AG04450 (cell line): ENCODE measurements at regions of chr1 and their contacts with region 1.

Region 1: DNA sequence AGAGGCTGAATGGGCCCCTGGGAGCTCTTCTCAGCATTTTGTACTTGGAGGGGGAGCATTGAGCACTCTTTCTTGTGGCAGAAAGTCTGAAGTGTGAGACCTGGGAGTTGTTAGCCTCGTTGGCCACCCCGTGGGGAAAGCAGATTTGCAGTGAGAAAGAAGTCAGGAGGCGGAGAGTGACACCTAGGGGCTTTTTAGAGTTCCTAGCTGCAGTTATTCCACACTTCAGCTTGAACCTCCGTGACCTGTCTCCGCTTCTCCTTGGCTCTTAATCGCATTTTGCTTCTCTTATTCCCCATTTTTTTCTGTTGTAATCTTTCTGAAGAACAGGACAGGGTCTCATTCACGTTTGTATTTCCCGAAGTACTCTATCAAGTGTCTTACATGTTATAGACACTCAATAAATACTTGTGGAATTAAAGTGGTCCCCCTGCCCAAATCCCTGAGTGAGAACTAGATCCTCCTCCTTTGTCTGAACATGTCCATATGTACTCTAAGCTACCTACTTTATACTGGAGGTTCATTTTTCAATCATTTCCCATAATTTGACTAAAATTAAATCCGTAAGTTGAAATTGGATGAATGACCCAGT is 14.5 kb upstream of the C1orf141 start:
- DNase-seq: peak; percentile 66
- H3K4me3 ChIP-seq: no peak overlapping the region
- H3K27ac ChIP-seq: no peak overlapping the region
- H3K27me3 ChIP-seq: peaks cover 5% of the 10 kb centered on the region
- CTCF ChIP-seq: peak; percentile 91

Region 2: DNA sequence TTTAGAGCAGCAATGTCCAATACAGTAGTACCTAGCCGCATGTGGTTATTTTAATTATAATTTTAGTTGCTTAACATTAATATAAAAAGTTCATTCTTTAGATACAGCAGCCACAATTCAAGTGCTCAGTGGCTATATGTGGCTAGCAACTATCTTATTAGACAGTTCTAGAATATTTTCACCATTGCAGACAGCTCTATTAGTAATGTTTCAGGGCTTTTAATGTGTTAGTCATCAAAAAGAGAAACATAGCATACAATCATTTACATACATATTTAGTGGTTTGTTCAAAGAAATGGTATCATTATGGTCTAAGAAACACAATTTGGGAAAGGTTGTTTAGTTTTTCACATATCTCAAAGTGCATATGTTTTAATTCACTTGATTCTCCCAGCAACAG is 463.6 kb before region 1 on chr1:
- CTCF ChIA-PET with region 1: no interaction called
- POLR2A ChIA-PET with region 1: no interaction called
- DNase-seq: no peak
- H3K4me3 ChIP-seq: no peak overlapping the region
- H3K27ac ChIP-seq: no peak overlapping the region
- H3K27me3 ChIP-seq: no peaks in the 10 kb centered on the region
- CTCF ChIP-seq: no peak

Region 3: GRCh38 chr1:66764994-66765578 is 384.2 kb before region 1 on chr1:
- CTCF ChIA-PET with region 1: interaction called, 100 read pairs
- POLR2A ChIA-PET with region 1: no interaction called
- DNase-seq: peak; percentile 29
- H3K4me3 ChIP-seq: no peak overlapping the region
- H3K27ac ChIP-seq: no peak overlapping the region
- H3K27me3 ChIP-seq: no peaks in the 10 kb centered on the region
- CTCF ChIP-seq: peak; percentile 78

Region 4: DNA sequence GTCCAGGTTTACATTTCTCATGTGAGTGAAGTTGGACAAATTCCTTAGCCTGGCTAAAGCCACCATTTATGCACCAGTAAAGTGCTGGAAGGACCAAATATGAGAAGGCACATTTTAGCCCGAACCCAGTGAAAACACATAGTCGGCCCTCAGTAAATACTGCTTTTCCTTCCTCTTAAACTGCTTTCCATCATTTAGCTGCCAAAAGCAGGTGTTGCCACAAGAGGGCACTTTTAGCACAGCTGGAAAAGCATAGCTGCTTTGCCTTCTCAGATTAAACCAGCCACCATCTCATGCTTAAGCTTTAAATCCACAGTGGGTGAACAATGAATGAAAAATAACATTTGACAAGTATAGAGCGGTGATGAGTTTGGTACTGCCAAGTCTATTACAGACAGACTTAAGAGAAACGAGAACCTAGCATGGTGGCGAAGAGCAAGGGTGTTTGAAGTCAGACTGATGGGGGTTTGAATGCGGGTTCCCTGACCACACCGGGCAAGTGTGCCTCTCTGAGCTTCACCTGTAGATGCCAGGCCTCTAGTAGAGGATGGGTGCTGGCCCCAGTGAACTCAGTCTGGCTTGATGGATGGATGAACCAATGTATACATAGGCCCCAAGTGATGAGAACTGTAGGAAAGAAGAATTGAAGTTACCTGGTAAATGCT is 153.1 kb before region 1 on chr1:
- CTCF ChIA-PET with region 1: interaction called, 325 read pairs
- POLR2A ChIA-PET with region 1: interaction called, 9 read pairs
- DNase-seq: peak; percentile 55
- H3K4me3 ChIP-seq: no peak overlapping the region
- H3K27ac ChIP-seq: no peak overlapping the region
- H3K27me3 ChIP-seq: no peaks in the 10 kb centered on the region
- CTCF ChIP-seq: peak; percentile 89

Region 5: DNA sequence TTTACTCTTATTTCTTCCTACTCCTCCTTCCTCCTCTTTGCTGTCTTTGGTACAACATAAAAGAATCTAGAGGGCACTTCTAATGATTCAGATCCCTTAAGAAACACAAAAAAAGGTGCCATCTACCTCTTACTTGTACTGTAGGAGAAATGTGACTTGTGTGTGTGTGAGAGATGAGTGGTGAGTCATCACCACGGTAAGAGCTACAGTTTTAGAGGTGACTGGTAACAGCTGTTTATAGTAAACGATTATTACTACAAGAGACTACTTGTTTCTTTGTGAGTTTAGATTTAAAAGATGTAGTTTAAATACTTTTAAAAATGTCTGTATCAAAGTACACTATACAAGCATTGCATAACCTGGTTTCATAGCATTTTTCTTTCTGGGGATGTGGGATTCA is 135.7 kb before region 1 on chr1:
- CTCF ChIA-PET with region 1: interaction called, 28 read pairs
- POLR2A ChIA-PET with region 1: no interaction called
- DNase-seq: peak; percentile 68
- H3K4me3 ChIP-seq: no peak overlapping the region
- H3K27ac ChIP-seq: no peak overlapping the region
- H3K27me3 ChIP-seq: no peaks in the 10 kb centered on the region
- CTCF ChIP-seq: no peak

Region 6: DNA sequence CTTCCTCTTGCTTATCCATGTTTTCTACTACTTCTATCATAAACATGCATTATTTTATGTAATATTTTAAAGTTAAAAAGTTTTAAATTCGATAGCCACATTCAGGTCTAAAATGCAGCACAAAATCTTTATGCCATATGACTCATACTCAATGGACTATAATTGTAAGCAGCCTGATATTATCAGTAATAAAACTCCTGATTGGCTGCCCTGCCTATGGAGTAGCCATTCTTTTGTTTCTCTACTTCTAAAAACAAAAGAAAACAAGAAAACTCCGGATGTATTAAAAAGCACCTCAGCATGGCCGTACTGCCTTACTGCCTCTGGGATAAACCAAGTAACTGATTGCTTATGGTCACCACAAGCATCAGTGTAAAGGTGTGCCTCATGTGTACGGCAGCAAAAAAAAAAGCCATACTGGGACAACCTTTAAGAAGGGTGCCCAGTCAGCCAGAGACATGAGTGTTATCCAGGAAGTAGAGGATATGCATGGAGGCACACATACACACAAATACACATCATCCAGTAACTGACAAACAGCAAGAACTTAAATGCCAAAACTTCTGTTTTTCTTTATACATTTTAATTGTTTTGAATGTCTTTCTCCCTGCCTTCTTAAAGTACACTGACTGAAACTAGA is 104.5 kb before region 1 on chr1:
- CTCF ChIA-PET with region 1: interaction called, 38 read pairs
- POLR2A ChIA-PET with region 1: no interaction called
- DNase-seq: no peak
- H3K4me3 ChIP-seq: no peak overlapping the region
- H3K27ac ChIP-seq: no peak overlapping the region
- H3K27me3 ChIP-seq: no peaks in the 10 kb centered on the region
- CTCF ChIP-seq: no peak

Region 7: GRCh38 chr1:67134695-67135094 is 14.6 kb before region 1 on chr1 and contains the start of gene C1orf141:
- CTCF ChIA-PET with region 1: interaction called, 45 read pairs
- POLR2A ChIA-PET with region 1: no interaction called
- DNase-seq: no peak
- H3K4me3 ChIP-seq: no peak within 1 kb of the TSS; the same call in 1 of the 2 replicates
- H3K27ac ChIP-seq: no peak within 1 kb of the TSS
- H3K27me3 ChIP-seq: no peaks in the 10 kb centered on the region
- CTCF ChIP-seq: no peak
- polyA plus RNA-seq, gene C1orf141: not detected in 2 replicates

Region 8: GRCh38 chr1:67214420-67215174 is 65.3 kb after region 1 on chr1:
- CTCF ChIA-PET with region 1: interaction called, 37 read pairs
- POLR2A ChIA-PET with region 1: no interaction called
- DNase-seq: no peak
- H3K4me3 ChIP-seq: no peak overlapping the region
- H3K27ac ChIP-seq: no peak overlapping the region
- H3K27me3 ChIP-seq: peaks cover 6% of the 10 kb centered on the region
- CTCF ChIP-seq: peak; percentile 73

Region 9: GRCh38 chr1:67314696-67315095 is 165.4 kb after region 1 on chr1:
- CTCF ChIA-PET with region 1: no interaction called
- POLR2A ChIA-PET with region 1: no interaction called
- DNase-seq: no peak
- H3K4me3 ChIP-seq: no peak overlapping the region
- H3K27ac ChIP-seq: no peak overlapping the region
- H3K27me3 ChIP-seq: peaks cover 12% of the 10 kb centered on the region
- CTCF ChIP-seq: no peak